ENCODE measurements at regions of chr11 and their contacts with region 1.

Region 1: DNA sequence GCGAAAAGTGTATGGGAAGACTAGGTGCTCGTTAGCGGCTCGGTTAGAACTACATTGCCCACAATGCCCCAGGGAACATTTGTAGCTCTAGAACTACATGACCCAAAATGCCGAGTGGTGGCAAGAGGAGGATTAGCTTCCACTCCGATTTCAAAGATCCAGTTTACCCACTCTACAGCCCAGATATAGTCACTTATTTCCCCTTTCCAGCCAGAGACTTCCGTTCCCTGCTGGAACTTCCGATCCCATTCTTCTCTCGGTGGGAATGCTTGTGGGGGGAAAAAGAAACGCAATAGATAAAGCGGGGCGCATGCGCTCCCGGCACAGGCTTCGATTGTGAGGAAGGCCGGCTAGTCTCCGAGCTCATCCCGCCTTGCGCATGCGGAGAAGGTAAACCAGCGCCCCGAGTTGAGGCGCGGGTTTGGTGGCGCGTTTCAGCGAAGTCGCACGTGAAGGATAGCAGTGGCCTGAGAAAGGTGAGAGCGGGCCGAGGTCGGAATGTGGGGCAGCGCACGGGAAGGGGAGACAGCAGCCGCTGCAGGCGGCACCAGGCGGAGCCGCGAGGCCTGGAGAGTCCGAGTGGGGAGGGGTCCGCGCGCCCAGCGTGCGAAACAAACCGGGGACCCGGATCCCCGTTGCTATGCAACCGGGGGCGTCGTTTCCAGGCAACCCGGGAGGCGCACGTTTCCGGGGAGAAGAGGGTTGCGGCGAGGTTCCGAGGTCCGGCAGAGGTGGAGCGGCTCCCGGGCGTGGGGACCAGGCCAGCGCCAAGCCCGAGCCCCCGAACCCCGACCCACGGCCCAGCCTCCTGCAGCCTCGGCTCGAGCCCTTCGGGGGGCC is at the start of gene TMEM109:
- DNase-seq: peak; percentile 86
- ATAC-seq: peak; percentile 67
- H3K4me3 ChIP-seq: peak within 1 kb of the TSS; percentile 82
- H3K27ac ChIP-seq: peak within 1 kb of the TSS; percentile 94
- H3K4me1 ChIP-seq: peaks cover 59% of the 10 kb centered on the region
- H3K27me3 ChIP-seq: no peaks in the 10 kb centered on the region
- CTCF ChIP-seq: no peak
- EP300 ChIP-seq: no peak
- POLR2A ChIP-seq: peak; percentile 70
- RAD21 ChIP-seq: no peak
- polyA plus RNA-seq, gene TMEM109: 21.9 to 52.9 TPM

Region 2: GRCh38 chr11:60899046-60899936 is 14.7 kb before region 1 on chr11:
- CTCF ChIA-PET with region 1: interaction called, 18 read pairs
- POLR2A ChIA-PET with region 1: interaction called, 10 read pairs
- RAD21 ChIA-PET with region 1: interaction called, 18 read pairs
- SMC1A ChIA-PET with region 1: interaction called, 27 read pairs
- in situ Hi-C with region 1: no loop called
- intact Hi-C with region 1: no loop called
- DNase-seq: no peak
- ATAC-seq: peak; percentile 93
- H3K4me3 ChIP-seq: no peak overlapping the region
- H3K27ac ChIP-seq: no peak overlapping the region
- H3K4me1 ChIP-seq: no peaks in the 10 kb centered on the region; the same call in 1 of the 2 replicates
- H3K27me3 ChIP-seq: no peaks in the 10 kb centered on the region
- CTCF ChIP-seq: peak; percentile 85 to 98 (median 94)
- EP300 ChIP-seq: no peak
- POLR2A ChIP-seq: no peak
- RAD21 ChIP-seq: peak; percentile 64

Region 3: DNA sequence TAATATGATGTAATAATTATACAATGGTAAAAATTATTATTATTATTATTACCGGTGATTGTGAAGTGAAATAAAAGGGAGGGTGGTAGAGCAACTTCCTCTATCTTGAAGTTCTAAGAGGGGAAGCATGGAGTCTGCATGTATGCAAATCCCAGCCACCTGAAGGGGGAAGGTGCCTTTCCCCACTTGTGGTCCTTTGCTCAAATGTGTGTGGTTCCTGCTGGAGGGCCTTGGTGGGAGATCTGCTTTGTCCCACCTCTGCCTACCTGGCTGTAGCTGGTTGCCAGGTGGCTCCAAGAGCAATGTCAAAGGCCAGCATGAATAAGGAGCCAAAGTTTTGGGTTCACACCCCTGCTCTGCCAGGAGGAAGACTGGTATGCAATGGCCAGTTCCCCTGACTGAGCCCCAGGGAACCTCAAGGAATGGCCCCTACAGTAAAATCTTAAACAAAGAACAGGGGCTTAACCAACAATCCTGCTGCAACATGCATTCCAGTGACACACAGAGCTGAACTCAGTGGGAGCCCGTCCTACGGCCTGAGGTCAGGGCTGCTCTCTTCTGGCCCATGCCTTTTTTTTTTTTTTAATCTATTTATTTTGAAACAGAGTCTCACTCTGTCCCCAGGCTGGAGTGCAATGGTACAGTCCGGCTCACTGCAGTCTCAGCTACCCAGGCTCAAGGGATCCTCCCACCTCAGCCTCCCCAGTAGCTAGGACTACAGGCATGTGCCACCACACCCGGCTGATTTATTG is 18.8 kb after region 1 on chr11:
- CTCF ChIA-PET with region 1: interaction called, 8 read pairs
- POLR2A ChIA-PET with region 1: interaction called, 3 read pairs
- RAD21 ChIA-PET with region 1: interaction called, 14 read pairs
- SMC1A ChIA-PET with region 1: interaction called, 19 read pairs
- in situ Hi-C with region 1: no loop called
- intact Hi-C with region 1: no loop called
- DNase-seq: no peak
- ATAC-seq: peak; percentile 14; the same call in 1 of the 3 replicates
- H3K4me3 ChIP-seq: no peak overlapping the region
- H3K27ac ChIP-seq: no peak overlapping the region
- H3K4me1 ChIP-seq: peaks cover 17% of the 10 kb centered on the region
- H3K27me3 ChIP-seq: no peaks in the 10 kb centered on the region
- CTCF ChIP-seq: no peak
- EP300 ChIP-seq: no peak
- POLR2A ChIP-seq: no peak
- RAD21 ChIP-seq: no peak

Region 4: DNA sequence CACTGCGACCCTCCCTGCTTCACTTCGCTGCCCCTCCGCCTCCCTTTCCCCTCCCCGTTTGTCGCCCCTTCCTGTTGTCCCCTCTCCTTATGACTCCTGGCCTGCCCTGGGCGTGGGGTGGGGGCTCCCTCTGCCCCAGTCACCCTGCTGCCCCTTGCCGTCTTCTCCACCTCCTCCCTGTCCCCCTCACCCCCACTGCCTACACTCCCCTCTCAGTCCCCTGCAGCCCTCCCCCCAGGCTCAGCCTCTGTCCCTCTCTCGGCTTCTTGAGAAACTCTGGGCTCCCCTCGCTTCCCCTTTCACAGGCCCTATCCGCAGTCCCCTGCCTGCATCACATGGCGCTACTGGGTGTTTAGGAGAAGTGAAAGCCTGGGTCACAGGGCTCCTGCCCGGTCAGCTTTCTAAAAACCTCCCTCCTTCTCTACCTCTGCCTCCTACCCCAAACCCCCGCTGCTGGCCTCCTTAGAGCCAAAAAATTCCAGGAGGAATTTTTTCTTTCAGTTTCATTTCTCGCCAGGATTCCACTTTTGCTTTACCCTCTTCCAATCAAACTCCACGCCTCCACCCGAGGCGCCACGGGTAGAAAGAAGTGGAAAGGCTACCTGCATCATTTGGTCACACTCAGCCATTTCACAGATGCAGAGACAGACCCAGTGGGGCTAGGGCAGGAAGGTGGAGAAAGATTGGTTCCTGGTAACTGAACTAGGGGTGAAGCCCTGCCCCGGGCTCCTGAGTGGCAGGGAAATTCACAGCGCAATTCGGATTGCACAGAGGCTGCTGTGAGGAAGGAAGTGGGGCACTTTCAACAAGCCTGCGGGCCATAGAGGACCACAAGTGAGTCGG is 38.1 kb after region 1 on chr11 and contains the start of gene SLC15A3:
- CTCF ChIA-PET with region 1: interaction called, 18 read pairs
- POLR2A ChIA-PET with region 1: interaction called, 11 read pairs
- RAD21 ChIA-PET with region 1: interaction called, 43 read pairs
- SMC1A ChIA-PET with region 1: interaction called, 76 read pairs
- in situ Hi-C with region 1: no loop called
- intact Hi-C with region 1: loop called (anchors 2 kb)
- DNase-seq: peak; percentile 61
- ATAC-seq: peak; percentile 88
- H3K4me3 ChIP-seq: peak within 1 kb of the TSS; percentile 94
- H3K27ac ChIP-seq: peak within 1 kb of the TSS; percentile 97
- H3K4me1 ChIP-seq: peaks cover 28% of the 10 kb centered on the region
- H3K27me3 ChIP-seq: no peaks in the 10 kb centered on the region
- CTCF ChIP-seq: no peak
- EP300 ChIP-seq: 0 out of 4 replicates have a peak, but pooled peaks of 1 of the 2 experiments have one; percentile 23
- POLR2A ChIP-seq: peak; percentile 85
- RAD21 ChIP-seq: no peak
- polyA plus RNA-seq, gene SLC15A3: 17.7 to 55.4 TPM

Region 5: DNA sequence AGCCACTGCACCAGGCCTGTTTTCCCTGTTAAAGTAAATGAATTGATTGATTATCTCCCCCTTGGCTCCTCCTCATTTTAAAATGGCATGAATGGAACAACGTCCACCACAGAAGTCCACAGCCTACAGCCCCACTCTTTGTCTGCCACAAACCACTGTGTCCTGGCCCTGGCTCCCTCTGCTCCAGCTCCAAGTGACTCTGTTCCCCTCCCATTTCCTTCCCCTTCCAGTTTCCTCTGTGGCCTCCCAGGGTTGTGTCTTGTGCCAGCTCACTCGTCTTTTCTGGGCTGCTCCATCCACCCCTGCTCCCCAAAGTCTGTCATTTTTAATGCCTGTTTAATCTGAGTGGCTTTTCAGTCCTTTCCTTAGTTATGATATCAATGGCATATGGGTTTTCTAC is 135.8 kb after region 1 on chr11:
- CTCF ChIA-PET with region 1: interaction called, 5 read pairs
- POLR2A ChIA-PET with region 1: no interaction called
- RAD21 ChIA-PET with region 1: interaction called, 3 read pairs
- SMC1A ChIA-PET with region 1: interaction called, 10 read pairs
- in situ Hi-C with region 1: no loop called
- intact Hi-C with region 1: no loop called
- DNase-seq: no peak
- ATAC-seq: no peak
- H3K4me3 ChIP-seq: no peak overlapping the region
- H3K27ac ChIP-seq: no peak overlapping the region
- H3K4me1 ChIP-seq: no peaks in the 10 kb centered on the region
- H3K27me3 ChIP-seq: no peaks in the 10 kb centered on the region
- CTCF ChIP-seq: no peak
- EP300 ChIP-seq: no peak
- POLR2A ChIP-seq: no peak
- RAD21 ChIP-seq: no peak

Region 6: GRCh38 chr11:61129639-61130523 is 215.9 kb after region 1 on chr11:
- CTCF ChIA-PET with region 1: interaction called, 30 read pairs
- POLR2A ChIA-PET with region 1: no interaction called
- RAD21 ChIA-PET with region 1: interaction called, 22 read pairs
- SMC1A ChIA-PET with region 1: interaction called, 9 read pairs
- in situ Hi-C with region 1: no loop called
- intact Hi-C with region 1: no loop called
- DNase-seq: peak; percentile 44
- ATAC-seq: peak; percentile 97
- H3K4me3 ChIP-seq: no peak overlapping the region
- H3K27ac ChIP-seq: peak overlapping the region; percentile 52; the same call in 1 of the 2 replicates
- H3K4me1 ChIP-seq: peaks cover 7% of the 10 kb centered on the region
- H3K27me3 ChIP-seq: no peaks in the 10 kb centered on the region
- CTCF ChIP-seq: peak; percentile 100
- EP300 ChIP-seq: no peak
- POLR2A ChIP-seq: no peak; the same call in 1 of the 2 replicates
- RAD21 ChIP-seq: peak; percentile 100

Measured in GM12878 (cell line).